ENCODE measurements at regions of chr16 and their contacts with region 1.

Region 1: DNA sequence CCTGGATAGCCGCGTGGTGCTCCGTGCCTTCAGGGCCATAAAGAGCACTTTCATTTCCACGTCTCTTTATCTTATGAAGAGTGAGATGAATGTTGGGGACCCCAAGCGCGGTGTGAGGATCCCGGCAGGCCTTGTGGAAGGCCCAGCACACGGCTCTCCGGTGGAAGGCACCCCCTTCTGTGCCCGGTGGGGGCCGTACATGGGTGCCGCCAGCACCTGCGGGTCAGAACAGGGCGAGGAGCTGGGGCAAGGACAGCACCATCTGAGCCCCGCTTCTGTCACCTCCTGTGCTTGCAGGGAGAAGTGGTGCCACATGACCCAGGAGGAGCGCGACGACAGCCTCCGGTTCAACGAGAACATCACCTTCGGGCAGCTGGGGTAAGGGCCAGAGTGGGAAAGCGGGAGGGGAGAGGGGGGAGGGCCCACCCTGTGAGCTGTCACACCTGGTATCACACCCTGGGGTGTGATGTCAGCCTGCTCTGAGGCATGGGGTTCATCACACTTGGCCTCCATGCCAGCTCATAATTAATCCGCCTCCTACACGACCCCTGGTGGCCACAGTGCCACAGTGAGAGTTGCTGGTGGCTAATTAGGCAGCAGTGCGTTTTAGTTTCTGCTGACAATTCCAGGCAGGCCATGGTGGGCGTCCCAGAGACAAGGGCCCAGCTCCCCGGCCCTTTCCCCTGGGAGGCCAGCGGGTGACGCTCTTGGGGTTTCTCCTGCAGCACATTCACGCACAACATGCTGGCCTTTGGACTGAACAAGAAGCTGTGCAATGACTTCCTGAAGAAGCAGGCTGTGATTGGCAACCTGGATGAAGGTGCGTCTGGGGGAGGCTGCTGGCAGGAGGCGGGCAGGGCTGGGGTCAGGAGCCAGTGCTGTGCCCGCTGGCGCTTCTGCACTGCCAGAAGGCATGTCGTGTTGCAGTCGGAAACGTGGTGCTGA is 25.7 kb downstream of the CIBAR2 start:
- DNase-seq: peak; percentile 54
- ATAC-seq: peak; percentile 94
- H3K4me3 ChIP-seq: no peak overlapping the region
- H3K27ac ChIP-seq: no peak overlapping the region
- H3K4me1 ChIP-seq: peaks cover 0 to 7% of the 10 kb centered on the region in 2 experiments; a peak in 2 of 4 replicates
- H3K27me3 ChIP-seq: no peaks in the 10 kb centered on the region
- CTCF ChIP-seq: peak; percentile 84 to 88 (median 85)
- POLR2A ChIP-seq: no peak
- RAD21 ChIP-seq: peak; percentile 85

Region 2: DNA sequence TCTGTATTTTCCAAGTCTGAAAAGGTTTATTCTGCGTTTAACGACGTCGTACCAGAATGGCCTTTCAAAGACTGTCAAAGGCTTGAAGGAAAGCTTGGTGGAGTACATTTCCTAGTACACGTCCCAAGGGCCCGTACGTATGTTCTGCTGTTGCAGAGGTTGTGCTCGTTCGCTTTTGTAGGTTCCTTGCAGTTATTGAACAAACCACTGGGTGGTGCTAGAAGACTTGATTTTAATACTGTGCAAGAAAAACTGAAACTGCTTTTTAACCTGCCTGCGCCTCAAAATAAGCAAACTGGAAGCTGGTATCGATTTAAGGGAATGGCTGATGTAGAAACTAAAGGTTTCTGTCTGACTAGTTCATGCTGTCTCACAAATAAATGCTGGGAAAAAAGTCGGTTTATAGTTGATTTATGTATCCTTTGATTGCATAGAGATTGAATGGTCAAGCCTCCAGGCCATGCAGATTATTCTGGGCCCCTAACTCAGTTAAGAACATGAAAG is 332.2 kb before region 1 on chr16:
- CTCF ChIA-PET with region 1: no interaction called
- POLR2A ChIA-PET with region 1: no interaction called
- RAD21 ChIA-PET with region 1: no interaction called
- intact Hi-C with region 1: loop called (anchors 1 kb)
- DNase-seq: peak; percentile 79
- ATAC-seq: peak; percentile 86
- H3K4me3 ChIP-seq: no peak overlapping the region
- H3K27ac ChIP-seq: no peak overlapping the region
- H3K4me1 ChIP-seq: peaks cover 0 to 13% of the 10 kb centered on the region in 2 experiments; a peak in 1 of 4 replicates
- H3K27me3 ChIP-seq: no peaks in the 10 kb centered on the region
- CTCF ChIP-seq: peak; percentile 82 to 97 (median 86)
- POLR2A ChIP-seq: no peak
- RAD21 ChIP-seq: peak; percentile 90

Region 3: DNA sequence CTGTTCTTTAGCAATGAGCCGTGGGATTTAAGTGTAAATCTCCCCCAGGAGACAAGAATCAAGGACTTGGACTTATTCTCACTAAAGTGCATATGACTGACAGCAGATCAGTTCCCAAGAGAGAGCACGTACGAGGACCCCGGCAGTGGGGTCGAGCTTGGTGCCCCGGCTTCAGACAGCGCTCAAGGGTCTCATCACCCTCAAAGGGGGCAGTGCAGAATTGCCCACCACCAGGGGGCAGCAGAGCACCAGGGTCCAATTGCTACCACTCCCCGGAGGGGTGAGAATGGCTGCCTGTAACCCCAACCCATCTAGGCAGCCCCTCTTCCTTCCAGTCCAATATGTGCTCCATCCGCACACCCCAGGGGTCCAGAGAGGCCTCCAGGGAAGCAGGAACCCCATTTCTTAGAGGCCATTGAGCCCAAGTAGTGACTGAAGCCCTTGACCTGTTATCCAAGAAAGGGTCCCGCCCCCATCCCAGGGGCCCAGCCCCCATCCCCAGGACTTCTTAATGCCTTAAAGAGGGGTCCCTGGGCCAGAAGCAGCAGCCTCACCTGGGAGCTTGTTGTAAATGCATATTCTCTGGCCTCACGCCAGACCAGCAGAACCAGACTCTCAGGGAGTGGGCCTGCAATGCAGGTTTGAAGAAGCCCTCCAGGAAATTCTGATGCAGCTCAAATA is 161.4 kb before region 1 on chr16:
- CTCF ChIA-PET with region 1: interaction called, 11 read pairs
- POLR2A ChIA-PET with region 1: no interaction called
- RAD21 ChIA-PET with region 1: no interaction called
- intact Hi-C with region 1: loop called (anchors 1 kb)
- DNase-seq: peak; percentile 35
- ATAC-seq: peak; percentile 87
- H3K4me3 ChIP-seq: no peak overlapping the region
- H3K27ac ChIP-seq: no peak overlapping the region
- H3K4me1 ChIP-seq: peaks cover 0 to 12% of the 10 kb centered on the region in 2 experiments; a peak in 1 of 4 replicates
- H3K27me3 ChIP-seq: no peaks in the 10 kb centered on the region
- CTCF ChIP-seq: peak; percentile 95 to 100 (median 98)
- POLR2A ChIP-seq: no peak
- RAD21 ChIP-seq: peak; percentile 96

Region 4: GRCh38 chr16:85010931-85011845 is 75.4 kb before region 1 on chr16 and contains the start of gene ZDHHC7:
- CTCF ChIA-PET with region 1: interaction called, 4 read pairs
- POLR2A ChIA-PET with region 1: no interaction called
- RAD21 ChIA-PET with region 1: no interaction called
- intact Hi-C with region 1: loop called (anchors 2 kb)
- DNase-seq: peak; percentile 69
- ATAC-seq: peak; percentile 93
- H3K4me3 ChIP-seq: peak within 1 kb of the TSS; percentile 65 to 78
- H3K27ac ChIP-seq: peak within 1 kb of the TSS; percentile 93
- H3K4me1 ChIP-seq: peaks cover 9% of the 10 kb centered on the region in 2 experiments; a peak in 3 of 4 replicates
- H3K27me3 ChIP-seq: no peaks in the 10 kb centered on the region
- CTCF ChIP-seq: no peak
- POLR2A ChIP-seq: peak; percentile 96
- RAD21 ChIP-seq: no peak
- total RNA-seq, gene ZDHHC7: 39.9 TPM

Region 5: GRCh38 chr16:85027349-85027957 is 59.2 kb before region 1 on chr16 and contains the start of gene KIAA0513:
- CTCF ChIA-PET with region 1: interaction called, 5 read pairs
- POLR2A ChIA-PET with region 1: no interaction called
- RAD21 ChIA-PET with region 1: no interaction called
- intact Hi-C with region 1: loop called (anchors 5 kb)
- DNase-seq: peak; percentile 86
- ATAC-seq: peak; percentile 87
- H3K4me3 ChIP-seq: peak within 1 kb of the TSS; percentile 56 to 82
- H3K27ac ChIP-seq: peak within 1 kb of the TSS; percentile 21
- H3K4me1 ChIP-seq: peaks cover 28 to 39% of the 10 kb centered on the region in 2 experiments
- H3K27me3 ChIP-seq: peaks cover 9% of the 10 kb centered on the region; the same call in 1 of the 2 replicates
- CTCF ChIP-seq: peak in 1 of 3 experiments; percentile 18; a peak in 2 of 6 replicates
- POLR2A ChIP-seq: peak; percentile 93
- RAD21 ChIP-seq: no peak
- total RNA-seq, gene KIAA0513: 6.6 TPM

Measured in HCT116 (cell line).